ENCODE measurements at regions of chr2 and their contacts with region 1.

Region 1: GRCh38 chr2:36351736-36352349 is 3.7 kb upstream of the CRIM1 start:
- DNase-seq: no peak
- H3K4me3 Mint-ChIP-seq: no peak overlapping the region
- H3K27ac Mint-ChIP-seq: no peak overlapping the region
- H3K4me1 Mint-ChIP-seq: peaks cover 5% of the 10 kb centered on the region
- H3K27me3 Mint-ChIP-seq: peaks cover 45% of the 10 kb centered on the region

Region 2: GRCh38 chr2:36338817-36339125 is 13.1 kb before region 1 on chr2:
- CTCF ChIA-PET with region 1: interaction called, 25 read pairs
- DNase-seq: no peak
- H3K4me3 Mint-ChIP-seq: no peak overlapping the region
- H3K27ac Mint-ChIP-seq: no peak overlapping the region
- H3K4me1 Mint-ChIP-seq: peaks cover 5% of the 10 kb centered on the region
- H3K27me3 Mint-ChIP-seq: no peaks in the 10 kb centered on the region

Region 3: GRCh38 chr2:36663851-36664695 is 312.2 kb after region 1 on chr2:
- CTCF ChIA-PET with region 1: interaction called, 11 read pairs
- DNase-seq: no peak
- H3K4me3 Mint-ChIP-seq: no peak overlapping the region
- H3K27ac Mint-ChIP-seq: no peak overlapping the region
- H3K4me1 Mint-ChIP-seq: no peaks in the 10 kb centered on the region
- H3K27me3 Mint-ChIP-seq: peaks cover 4% of the 10 kb centered on the region

Measured in activated naive CD4-positive, alpha-beta T cell treated with anti-CD3 and anti-CD28 coated beads, Interleukin-2, amount 10 ng/mL, durations not matched to agents 7 days and 5 days (primary cell).